Lower leg skin (tissue), 4 donors: ENCODE measurements at regions of chr2 and their contacts with region 1.

Region 1: DNA sequence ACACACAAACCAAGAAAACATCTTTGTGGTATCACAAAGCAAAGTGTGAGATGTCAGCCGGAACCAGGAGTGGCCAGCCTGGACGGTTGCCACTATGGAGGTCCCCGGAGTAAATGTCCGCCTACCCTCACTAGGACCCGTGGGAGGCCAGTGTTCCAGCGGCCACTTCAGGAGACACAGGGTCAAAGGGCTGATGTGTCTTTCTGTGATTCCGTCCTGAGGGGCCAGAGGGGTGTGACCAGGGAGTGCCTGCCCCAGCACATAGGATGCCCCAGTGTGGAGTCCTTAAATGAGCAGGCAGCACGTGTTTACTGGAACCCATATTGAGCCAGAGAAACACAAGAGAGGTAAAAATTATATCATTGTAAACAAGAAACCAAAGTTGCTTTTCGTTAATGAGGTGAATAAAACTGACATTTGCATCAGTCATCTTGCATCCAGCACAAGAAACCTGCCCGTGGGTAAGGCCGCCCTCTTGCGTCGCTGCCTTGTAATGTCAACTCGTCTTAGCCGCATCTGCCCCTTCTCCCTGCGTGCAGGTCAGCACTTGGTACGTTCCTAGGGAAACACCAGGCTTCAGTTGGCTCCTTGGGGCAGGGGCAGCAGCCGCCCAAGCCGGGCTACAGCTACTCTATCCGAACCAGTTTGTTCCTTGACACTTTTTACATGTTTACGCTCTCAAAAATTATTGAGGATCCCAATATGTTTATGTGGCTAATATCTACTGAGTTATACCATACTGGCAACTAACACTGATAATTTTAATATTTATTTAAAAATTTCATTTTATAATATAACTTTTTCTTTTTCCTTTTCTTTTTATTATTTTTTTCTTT is 46.7 kb upstream of the LAPTM4A start:
- DNase-seq: peak; percentile 76 to 97
- H3K4me3 ChIP-seq: no peak overlapping the region
- CTCF ChIP-seq: peak in 1 of 3 donors; percentile 69
- POLR2A ChIP-seq: no peak

Region 2: GRCh38 chr2:19955544-19956422 is 142.3 kb before region 1 on chr2:
- intact Hi-C with region 1: loop called (anchors 5 kb)
- DNase-seq: peak in 1 of 2 donors; percentile 48
- H3K4me3 ChIP-seq: no peak overlapping the region
- CTCF ChIP-seq: peak in 1 of 3 donors; percentile 13
- POLR2A ChIP-seq: no peak

Region 3: DNA sequence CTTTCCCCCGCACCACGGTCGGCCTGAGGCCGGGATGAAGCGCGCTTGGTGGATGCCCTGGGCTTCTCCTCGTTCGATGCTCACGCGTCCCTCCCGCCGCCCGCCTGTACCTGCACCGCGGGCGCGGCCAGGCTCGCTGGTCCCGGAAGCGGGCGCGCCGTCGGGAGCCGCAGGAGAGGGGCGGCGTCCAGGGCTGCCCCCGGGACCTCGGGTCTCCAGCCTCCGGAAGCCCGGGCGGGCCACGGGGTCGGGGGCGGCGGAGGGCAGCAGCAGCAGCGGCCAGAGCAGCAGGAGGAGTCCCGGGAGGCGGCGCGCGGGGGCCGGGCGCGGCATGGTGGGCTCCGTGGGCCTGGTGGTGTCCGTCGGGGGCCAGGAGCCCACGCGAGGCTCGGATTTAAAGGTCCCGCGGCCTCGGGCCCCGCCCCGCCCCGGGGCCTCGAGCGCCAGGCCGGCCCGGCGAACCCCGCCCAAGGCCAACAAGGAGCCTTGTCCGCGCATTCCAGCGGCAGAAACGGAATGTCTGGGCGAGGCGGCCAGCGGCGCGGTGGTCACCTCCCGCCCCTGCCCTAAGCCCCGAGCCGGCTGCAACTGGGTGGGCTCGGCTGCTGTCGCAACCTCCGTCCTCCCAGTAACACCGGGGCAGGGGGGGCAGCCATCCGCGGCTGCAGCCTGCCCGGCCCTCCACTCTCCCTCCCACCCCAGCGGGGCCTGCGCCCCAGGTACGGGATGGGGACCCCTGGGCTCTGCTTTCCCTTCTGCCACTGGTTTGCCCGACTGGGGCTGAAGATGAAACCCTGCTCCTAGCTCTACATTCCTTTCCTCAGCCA is 85.6 kb before region 1 on chr2 and contains the start of gene MATN3:
- intact Hi-C with region 1: loop called (anchors 5 kb)
- DNase-seq: peak in 1 of 2 donors; percentile 86
- H3K4me3 ChIP-seq: peak within 1 kb of the TSS; percentile 4
- CTCF ChIP-seq: no peak
- POLR2A ChIP-seq: no peak
- total RNA-seq, gene MATN3: 0.11 to 1.5 (median 0.60) TPM

Region 4: DNA sequence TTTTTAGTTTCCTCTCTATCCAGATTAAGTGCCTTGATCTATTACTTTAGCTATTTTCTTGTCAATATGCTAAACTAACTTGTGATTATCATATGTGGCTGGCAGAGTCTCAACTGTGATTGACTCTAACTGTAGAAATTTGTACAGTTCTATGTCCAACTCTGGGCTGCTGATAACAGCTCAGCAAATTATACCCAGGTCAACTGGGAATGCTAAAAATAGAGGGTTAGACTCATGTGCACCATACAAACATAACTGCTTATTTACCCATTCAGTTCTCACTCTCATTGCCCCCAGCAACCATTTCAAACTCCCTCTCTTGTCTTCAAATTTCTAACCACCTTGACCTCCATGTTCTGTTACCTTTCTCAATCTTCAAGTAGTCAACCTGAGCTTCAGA is 1602.5 kb after region 1 on chr2:
- intact Hi-C with region 1: no loop called
- DNase-seq: no peak
- H3K4me3 ChIP-seq: no peak overlapping the region
- CTCF ChIP-seq: no peak
- POLR2A ChIP-seq: no peak